Activated B cell treated with CpG ODN at 0.5 μM for 24 hours (primary cell): ENCODE measurements at regions of chr5 and their contacts with region 1.

Region 1: DNA sequence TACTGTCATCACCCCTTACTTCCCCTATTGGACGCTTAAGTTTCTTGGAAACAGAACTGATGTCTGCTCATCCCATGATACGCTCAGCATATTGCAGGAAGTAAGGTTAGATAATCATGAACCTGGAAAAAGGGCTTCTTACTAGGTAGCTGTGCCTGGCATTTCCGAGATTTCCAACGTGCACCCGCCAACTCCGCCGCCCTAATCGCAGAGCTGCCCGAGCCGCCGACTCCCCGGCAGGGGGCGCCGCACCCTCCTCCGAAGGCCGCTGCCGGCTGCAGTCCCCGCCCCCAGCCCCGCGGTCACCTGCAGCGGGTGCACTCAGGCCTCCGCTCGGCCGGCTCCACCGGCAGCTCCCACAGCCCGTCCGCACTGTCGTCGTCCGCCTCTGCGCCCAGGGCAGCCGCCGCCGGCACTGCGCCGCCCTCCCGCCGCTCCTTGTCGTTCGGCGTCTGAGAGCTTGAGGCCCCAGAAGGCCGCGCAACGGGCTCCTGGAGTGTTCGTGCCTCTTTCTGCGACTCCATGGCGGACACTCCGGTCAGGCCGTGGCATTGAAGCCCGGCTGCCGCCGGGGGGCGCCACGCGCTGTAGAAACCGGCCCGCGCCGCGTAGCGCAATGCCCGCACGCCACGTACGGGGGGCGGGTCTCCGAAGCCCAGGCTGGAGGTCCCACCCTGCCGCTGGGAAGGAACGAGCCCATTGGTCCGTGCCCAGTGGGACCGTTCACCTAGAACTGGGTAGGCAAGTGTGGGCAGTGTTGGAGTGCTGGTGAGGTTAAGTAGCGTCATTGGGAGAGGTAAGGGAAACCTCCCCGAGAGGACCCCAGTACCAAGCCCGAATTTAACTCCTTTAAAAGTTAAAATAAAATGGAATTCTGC is at the start of gene DTWD2:
- DNase-seq: peak; percentile 95
- ATAC-seq: peak; percentile 88
- H3K4me3 Mint-ChIP-seq: peak within 1 kb of the TSS; percentile 84
- H3K27ac Mint-ChIP-seq: peak within 1 kb of the TSS; percentile 83
- H3K4me1 Mint-ChIP-seq: peaks cover 33% of the 10 kb centered on the region
- H3K27me3 Mint-ChIP-seq: no peaks in the 10 kb centered on the region
- CTCF ChIP-seq: peak; percentile 93
- total RNA-seq, gene DTWD2: 3.5 and 4.0 TPM in 2 replicates

Region 2: GRCh38 chr5:118529361-118530144 is 458.7 kb before region 1 on chr5:
- CTCF ChIA-PET with region 1: no interaction called
- POLR2A ChIA-PET with region 1: no interaction called
- intact Hi-C with region 1: no loop called
- DNase-seq: no peak
- ATAC-seq: no peak
- H3K4me3 Mint-ChIP-seq: no peak overlapping the region
- H3K27ac Mint-ChIP-seq: no peak overlapping the region
- H3K4me1 Mint-ChIP-seq: no peaks in the 10 kb centered on the region
- H3K27me3 Mint-ChIP-seq: peaks cover 3% of the 10 kb centered on the region
- CTCF ChIP-seq: no peak

Region 3: GRCh38 chr5:118919016-118919415 is 69.2 kb before region 1 on chr5:
- CTCF ChIA-PET with region 1: no interaction called
- POLR2A ChIA-PET with region 1: no interaction called
- intact Hi-C with region 1: no loop called
- DNase-seq: no peak
- ATAC-seq: no peak
- H3K4me3 Mint-ChIP-seq: no peak overlapping the region
- H3K27ac Mint-ChIP-seq: no peak overlapping the region
- H3K4me1 Mint-ChIP-seq: no peaks in the 10 kb centered on the region
- H3K27me3 Mint-ChIP-seq: no peaks in the 10 kb centered on the region
- CTCF ChIP-seq: no peak

Region 4: GRCh38 chr5:119016125-119016774 is 28.0 kb after region 1 on chr5:
- CTCF ChIA-PET with region 1: interaction called, 18 read pairs
- POLR2A ChIA-PET with region 1: interaction called, 5 read pairs
- intact Hi-C with region 1: loop called (anchors 1 kb)
- DNase-seq: peak; percentile 31
- ATAC-seq: peak; percentile 85
- H3K4me3 Mint-ChIP-seq: peak overlapping the region; percentile 19
- H3K27ac Mint-ChIP-seq: peak overlapping the region; percentile 91
- H3K4me1 Mint-ChIP-seq: peaks cover 57% of the 10 kb centered on the region
- H3K27me3 Mint-ChIP-seq: no peaks in the 10 kb centered on the region
- CTCF ChIP-seq: no peak

Region 5: GRCh38 chr5:119070828-119071572 is 82.8 kb after region 1 on chr5 and contains the start of gene DMXL1:
- CTCF ChIA-PET with region 1: interaction called, 15 read pairs
- POLR2A ChIA-PET with region 1: interaction called, 23 read pairs
- intact Hi-C with region 1: loop called (anchors 1 kb)
- DNase-seq: peak; percentile 95
- ATAC-seq: peak; percentile 82
- H3K4me3 Mint-ChIP-seq: peak within 1 kb of the TSS; percentile 99
- H3K27ac Mint-ChIP-seq: peak within 1 kb of the TSS; percentile 98
- H3K4me1 Mint-ChIP-seq: peaks cover 48% of the 10 kb centered on the region
- H3K27me3 Mint-ChIP-seq: peaks cover 2% of the 10 kb centered on the region
- CTCF ChIP-seq: no peak
- total RNA-seq, gene DMXL1: 66.8 and 76.9 TPM in 2 replicates

Region 6: DNA sequence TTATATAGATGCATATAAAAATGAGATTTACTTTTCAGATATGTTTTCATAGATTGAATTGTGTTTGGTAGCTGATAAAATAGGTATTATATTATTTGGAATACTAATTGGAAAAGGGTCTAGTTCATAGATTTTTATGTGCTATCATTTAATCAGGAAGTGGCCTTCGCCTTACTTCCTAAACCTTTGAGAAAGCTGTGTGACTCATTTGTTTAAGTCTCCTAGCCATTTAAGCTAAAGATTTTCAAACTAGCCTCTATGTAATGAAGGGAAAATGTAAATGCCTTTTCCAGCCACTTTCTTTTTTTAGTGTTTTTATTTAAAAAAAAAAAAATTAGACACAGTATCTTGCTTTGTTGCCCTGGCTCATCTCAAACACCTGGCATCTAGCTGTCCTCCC is 180.2 kb after region 1 on chr5:
- CTCF ChIA-PET with region 1: no interaction called
- POLR2A ChIA-PET with region 1: no interaction called
- intact Hi-C with region 1: no loop called
- DNase-seq: no peak
- ATAC-seq: no peak
- H3K4me3 Mint-ChIP-seq: no peak overlapping the region
- H3K27ac Mint-ChIP-seq: no peak overlapping the region
- H3K4me1 Mint-ChIP-seq: peaks cover 2% of the 10 kb centered on the region
- H3K27me3 Mint-ChIP-seq: no peaks in the 10 kb centered on the region
- CTCF ChIP-seq: no peak

Region 7: GRCh38 chr5:119267958-119268386 is 279.7 kb after region 1 on chr5:
- CTCF ChIA-PET with region 1: interaction called, 8 read pairs
- POLR2A ChIA-PET with region 1: interaction called, 7 read pairs
- intact Hi-C with region 1: loop called (anchors 1 kb)
- DNase-seq: peak; percentile 62
- ATAC-seq: peak; percentile 65
- H3K4me3 Mint-ChIP-seq: peak overlapping the region; percentile 95
- H3K27ac Mint-ChIP-seq: peak overlapping the region; percentile 95
- H3K4me1 Mint-ChIP-seq: peaks cover 50% of the 10 kb centered on the region
- H3K27me3 Mint-ChIP-seq: no peaks in the 10 kb centered on the region
- CTCF ChIP-seq: no peak

Region 8: GRCh38 chr5:119411935-119412602 is 423.8 kb after region 1 on chr5:
- CTCF ChIA-PET with region 1: interaction called, 101 read pairs
- POLR2A ChIA-PET with region 1: interaction called, 8 read pairs
- intact Hi-C with region 1: loop called (anchors 1 kb)
- DNase-seq: no peak
- ATAC-seq: peak; percentile 74
- H3K4me3 Mint-ChIP-seq: peak overlapping the region; percentile 90
- H3K27ac Mint-ChIP-seq: peak overlapping the region; percentile 89
- H3K4me1 Mint-ChIP-seq: peaks cover 81% of the 10 kb centered on the region
- H3K27me3 Mint-ChIP-seq: no peaks in the 10 kb centered on the region
- CTCF ChIP-seq: peak; percentile 98

Region 9: DNA sequence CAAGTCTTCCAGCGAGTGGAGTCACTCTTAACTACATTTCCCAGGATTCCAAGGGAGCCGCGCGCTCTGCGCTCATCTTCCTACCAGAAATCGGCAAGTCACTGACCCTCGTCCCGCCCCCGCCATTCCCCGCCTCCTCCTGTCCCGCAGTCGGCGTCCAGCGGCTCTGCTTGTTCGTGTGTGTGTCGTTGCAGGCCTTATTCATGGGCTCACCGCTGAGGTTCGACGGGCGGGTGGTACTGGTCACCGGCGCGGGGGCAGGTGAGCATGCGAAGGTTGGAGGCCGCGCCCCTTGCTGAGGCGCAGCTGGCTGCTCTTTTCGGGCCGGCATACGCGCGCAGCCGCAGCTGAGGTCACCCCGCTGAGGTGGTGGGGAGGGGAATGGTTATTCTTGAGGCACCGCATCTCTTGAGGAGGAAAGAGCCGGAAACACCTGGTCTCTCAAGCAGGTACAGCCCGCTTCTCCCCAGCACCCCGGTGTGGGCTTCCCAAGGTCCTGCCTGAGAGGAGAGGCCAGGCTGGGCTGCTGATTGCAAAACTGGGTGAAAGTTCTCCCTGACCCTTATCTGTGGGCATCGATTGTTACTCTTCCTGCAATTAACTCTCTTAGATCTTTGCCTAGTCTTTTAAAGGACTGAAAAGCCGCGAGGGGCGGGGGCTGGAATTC is 464.3 kb after region 1 on chr5 and contains the start of gene HSD17B4:
- CTCF ChIA-PET with region 1: interaction called, 6 read pairs
- POLR2A ChIA-PET with region 1: no interaction called
- intact Hi-C with region 1: loop called (anchors 1 kb)
- DNase-seq: peak; percentile 76
- ATAC-seq: peak; percentile 95
- H3K4me3 Mint-ChIP-seq: peak within 1 kb of the TSS; percentile 95
- H3K27ac Mint-ChIP-seq: peak within 1 kb of the TSS; percentile 95
- H3K4me1 Mint-ChIP-seq: peaks cover 53% of the 10 kb centered on the region
- H3K27me3 Mint-ChIP-seq: no peaks in the 10 kb centered on the region
- CTCF ChIP-seq: no peak
- total RNA-seq, gene HSD17B4: 106 and 130 TPM in 2 replicates